Activated CD4-positive, alpha-beta memory T cell treated with anti-CD3 and anti-CD28 coated beads for 36 hours (primary cell): ENCODE measurements at regions of chr2 and their contacts with region 1.

Region 1: DNA sequence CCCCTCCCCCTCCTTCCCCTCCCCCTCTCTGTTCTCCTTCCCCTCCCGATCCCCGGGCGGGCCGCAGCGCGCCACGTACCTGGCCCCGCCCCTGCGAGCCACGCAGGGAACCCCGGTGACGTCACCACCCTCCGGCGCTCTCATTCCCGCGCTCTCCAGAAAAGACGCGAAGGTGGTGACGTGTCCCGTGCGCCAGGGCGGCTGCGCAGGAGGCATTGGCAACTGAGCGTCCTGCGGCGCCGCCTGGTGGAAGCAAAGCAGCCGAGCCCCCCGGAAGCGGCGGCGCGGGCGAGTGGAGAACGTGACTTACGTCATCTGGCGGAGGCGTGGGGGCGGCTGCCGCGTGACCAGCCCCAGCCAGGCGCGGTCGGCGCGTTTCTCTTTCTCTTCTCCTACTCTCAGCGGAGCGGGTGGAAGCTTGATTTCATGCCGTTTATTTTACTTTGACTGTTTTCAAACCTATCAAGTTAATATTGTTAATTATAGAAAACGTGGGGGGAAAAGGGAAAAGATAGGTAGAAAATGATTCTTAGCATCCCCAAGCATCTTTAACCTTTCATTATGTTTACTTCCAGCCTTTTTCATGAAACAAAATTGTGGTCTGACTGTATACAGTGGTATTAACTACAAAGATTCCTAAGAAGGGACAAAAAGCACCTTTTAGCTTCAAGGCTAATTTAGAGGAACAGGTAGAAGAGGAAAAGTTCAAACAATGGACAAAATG is 48.1 kb downstream of the C2orf42 start:
- DNase-seq: peak; percentile 100
- H3K4me3 Mint-ChIP-seq: peak overlapping the region; percentile 89
- H3K27ac Mint-ChIP-seq: peak overlapping the region; percentile 96
- H3K4me1 Mint-ChIP-seq: peaks cover 62% of the 10 kb centered on the region
- H3K27me3 Mint-ChIP-seq: no peaks in the 10 kb centered on the region

Region 2: GRCh38 chr2:69386789-69387734 is 755.7 kb before region 1 on chr2 and contains the start of gene GFPT1:
- CTCF ChIA-PET with region 1: no interaction called
- POLR2A ChIA-PET with region 1: no interaction called
- intact Hi-C with region 1: loop called (anchors 10 kb)
- DNase-seq: peak; percentile 95
- H3K4me3 Mint-ChIP-seq: peak within 1 kb of the TSS; percentile 85
- H3K27ac Mint-ChIP-seq: peak within 1 kb of the TSS; percentile 80
- H3K4me1 Mint-ChIP-seq: peaks cover 39% of the 10 kb centered on the region
- H3K27me3 Mint-ChIP-seq: no peaks in the 10 kb centered on the region
- total RNA-seq, gene GFPT1: 39.8 to 43.6 TPM

Region 3: GRCh38 chr2:69837533-69837932 is 305.2 kb before region 1 on chr2:
- CTCF ChIA-PET with region 1: no interaction called
- POLR2A ChIA-PET with region 1: no interaction called
- intact Hi-C with region 1: no loop called
- DNase-seq: no peak
- H3K4me3 Mint-ChIP-seq: no peak overlapping the region
- H3K27ac Mint-ChIP-seq: no peak overlapping the region
- H3K4me1 Mint-ChIP-seq: peaks cover 42% of the 10 kb centered on the region
- H3K27me3 Mint-ChIP-seq: no peaks in the 10 kb centered on the region

Region 4: GRCh38 chr2:69933839-69934613 is 208.7 kb before region 1 on chr2:
- CTCF ChIA-PET with region 1: interaction called, 3 read pairs
- POLR2A ChIA-PET with region 1: no interaction called
- intact Hi-C with region 1: loop called (anchors 5 kb)
- DNase-seq: peak; percentile 63
- H3K4me3 Mint-ChIP-seq: no peak overlapping the region
- H3K27ac Mint-ChIP-seq: peak overlapping the region; percentile 73
- H3K4me1 Mint-ChIP-seq: peaks cover 37% of the 10 kb centered on the region
- H3K27me3 Mint-ChIP-seq: no peaks in the 10 kb centered on the region

Region 5: GRCh38 chr2:70104231-70105111 is 38.3 kb before region 1 on chr2:
- CTCF ChIA-PET with region 1: interaction called, 7 read pairs
- POLR2A ChIA-PET with region 1: interaction called, 9 read pairs
- intact Hi-C with region 1: loop called (anchors 1 kb)
- DNase-seq: peak; percentile 71
- H3K4me3 Mint-ChIP-seq: peak overlapping the region; percentile 70
- H3K27ac Mint-ChIP-seq: peak overlapping the region; percentile 95
- H3K4me1 Mint-ChIP-seq: peaks cover 52% of the 10 kb centered on the region
- H3K27me3 Mint-ChIP-seq: no peaks in the 10 kb centered on the region

Region 6: DNA sequence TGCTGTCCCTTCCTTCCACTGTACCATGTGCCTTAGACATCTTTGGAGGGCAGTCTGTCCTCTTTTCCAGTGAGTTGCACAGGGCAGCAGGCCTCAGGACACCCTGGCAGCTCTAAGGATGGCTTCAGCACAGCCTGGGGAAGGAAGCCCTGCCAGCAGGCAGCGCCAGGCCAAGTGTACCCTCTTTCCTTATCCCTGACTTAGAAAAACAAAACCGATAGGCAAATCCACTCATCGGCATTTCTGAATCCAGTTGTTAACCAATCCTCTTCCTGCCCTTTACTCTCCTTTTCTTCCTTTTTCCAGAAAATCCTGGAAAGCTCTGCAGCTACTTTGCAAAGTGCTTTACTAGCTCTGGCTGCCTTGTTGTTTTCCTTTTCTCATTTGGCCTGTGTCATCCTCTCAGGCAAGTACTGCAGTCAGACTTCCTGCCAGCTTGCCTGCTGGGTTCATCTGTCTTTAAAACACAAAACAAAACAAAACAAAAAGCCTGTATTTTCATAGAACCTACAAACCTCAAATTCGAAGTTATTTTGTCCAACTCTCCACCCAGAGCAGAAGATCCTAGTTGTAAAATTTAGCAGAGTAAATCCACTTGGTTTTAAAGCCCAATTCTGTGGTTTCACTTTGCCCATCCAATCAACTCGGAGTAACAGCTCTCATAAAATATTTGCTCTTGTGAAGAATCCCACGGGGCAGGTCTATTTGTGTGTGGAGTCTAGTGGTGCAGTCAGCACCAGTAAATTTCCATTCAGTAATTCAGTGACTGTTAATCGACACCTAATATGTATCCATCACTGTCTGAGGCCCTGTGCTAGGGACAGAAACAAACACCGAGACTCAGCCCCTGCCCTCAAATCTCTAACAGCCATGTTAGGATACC is 10.3 kb before region 1 on chr2:
- CTCF ChIA-PET with region 1: interaction called, 16 read pairs
- POLR2A ChIA-PET with region 1: interaction called, 108 read pairs
- intact Hi-C with region 1: loop called (anchors 1 kb)
- DNase-seq: peak; percentile 53
- H3K4me3 Mint-ChIP-seq: peak overlapping the region; percentile 94
- H3K27ac Mint-ChIP-seq: peak overlapping the region; percentile 100
- H3K4me1 Mint-ChIP-seq: peaks cover 75% of the 10 kb centered on the region
- H3K27me3 Mint-ChIP-seq: no peaks in the 10 kb centered on the region

Region 7: GRCh38 chr2:70248181-70248847 is 105.6 kb after region 1 on chr2 and contains the start of gene TIA1:
- CTCF ChIA-PET with region 1: no interaction called
- POLR2A ChIA-PET with region 1: no interaction called
- intact Hi-C with region 1: loop called (anchors 1 kb)
- DNase-seq: peak; percentile 99
- H3K4me3 Mint-ChIP-seq: peak within 1 kb of the TSS; percentile 90
- H3K27ac Mint-ChIP-seq: peak within 1 kb of the TSS; percentile 96
- H3K4me1 Mint-ChIP-seq: peaks cover 28% of the 10 kb centered on the region
- H3K27me3 Mint-ChIP-seq: peaks cover 4% of the 10 kb centered on the region
- total RNA-seq, gene TIA1: 82.5 to 98.6 TPM